ENCODE measurements at regions of chr10 and their contacts with region 1.

Region 1: GRCh38 chr10:81978238-81978637 is 103.2 kb downstream of the NRG3 start:
- DNase-seq: no peak
- H3K4me3 ChIP-seq: no peak overlapping the region
- H3K27ac ChIP-seq: no peak overlapping the region
- H3K4me1 ChIP-seq: no peaks in the 10 kb centered on the region
- H3K27me3 ChIP-seq: no peaks in the 10 kb centered on the region
- CTCF ChIP-seq: no peak

Region 2: DNA sequence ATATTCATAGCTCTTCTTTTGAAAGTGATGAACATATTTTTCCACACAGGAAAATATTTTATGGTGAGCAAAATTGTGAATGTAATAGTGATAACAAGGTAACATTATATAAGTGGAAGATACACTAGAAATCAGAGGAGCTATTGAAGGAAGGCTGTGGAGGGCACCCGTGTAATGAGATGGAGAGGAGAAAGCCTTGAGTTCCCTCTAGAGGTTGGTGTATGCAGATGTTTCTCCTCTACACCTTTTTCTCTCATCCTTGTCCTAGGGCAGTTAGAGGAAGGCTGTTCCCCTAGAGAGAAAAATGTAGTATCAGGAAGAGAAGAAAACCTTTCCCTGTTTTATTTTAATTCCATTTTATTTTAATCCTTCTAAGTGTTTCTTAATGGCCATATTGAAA is 157.8 kb before region 1 on chr10:
- CTCF ChIA-PET with region 1: interaction called, 14 read pairs
- POLR2A ChIA-PET with region 1: no interaction called
- intact Hi-C with region 1: no loop called
- DNase-seq: no peak
- H3K4me3 ChIP-seq: no peak overlapping the region
- H3K27ac ChIP-seq: no peak overlapping the region
- H3K4me1 ChIP-seq: no peaks in the 10 kb centered on the region
- H3K27me3 ChIP-seq: no peaks in the 10 kb centered on the region
- CTCF ChIP-seq: no peak; the same call in 1 of the 2 replicates

Region 3: GRCh38 chr10:82581940-82582339 is 603.7 kb after region 1 on chr10:
- CTCF ChIA-PET with region 1: no interaction called
- POLR2A ChIA-PET with region 1: no interaction called
- intact Hi-C with region 1: loop called (anchors 10 kb)
- DNase-seq: no peak
- H3K4me3 ChIP-seq: no peak overlapping the region
- H3K27ac ChIP-seq: no peak overlapping the region
- H3K4me1 ChIP-seq: no peaks in the 10 kb centered on the region
- H3K27me3 ChIP-seq: no peaks in the 10 kb centered on the region
- CTCF ChIP-seq: no peak

Measured in PC-9 (cell line).